ENCODE measurements at regions of chr2 and their contacts with region 1.

Region 1: GRCh38 chr2:74529357-74530238 is at the starts of genes AUP1 and HTRA2:
- DNase-seq: peak; percentile 96 to 99 (median 99)
- H3K4me3 ChIP-seq: peak within 1 kb of the TSS; percentile 64 to 100 (median 93)
- H3K27ac ChIP-seq: peak within 1 kb of the TSS; percentile 11 to 93 (median 81)
- H3K27me3 ChIP-seq: no peaks in the 10 kb centered on the region
- CTCF ChIP-seq: peak in 40 of 56 donors; percentile 15 to 67 (median 44)
- total RNA-seq, gene AUP1: 47.3 to 106 (median 69.1) TPM
- total RNA-seq, gene HTRA2: 25.1 to 46.4 (median 34.3) TPM

Region 2: DNA sequence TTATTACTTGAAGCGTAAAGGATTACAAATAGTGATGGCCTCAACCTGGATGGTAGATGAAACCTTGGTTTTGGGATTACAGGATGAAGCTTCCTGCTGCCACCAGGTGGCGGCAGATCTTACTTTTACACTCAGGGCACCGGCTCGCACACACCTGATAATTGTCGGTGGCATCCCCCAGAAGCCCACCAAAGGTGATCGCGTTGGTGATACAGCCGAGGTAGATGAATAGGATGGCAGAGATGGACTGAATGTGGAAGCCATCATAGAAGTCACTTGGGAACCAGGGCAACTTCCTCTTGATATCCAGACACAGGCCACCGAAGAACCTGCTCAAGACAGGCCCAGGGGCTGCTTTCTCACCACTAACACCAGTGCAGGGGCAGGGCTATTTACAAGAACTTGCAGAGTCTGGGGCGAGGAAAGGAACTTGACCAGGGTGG is 279.4 kb before region 1 on chr2:
- intact Hi-C with region 1: no loop called
- DNase-seq: peak in 6 of 10 donors; percentile 12 to 54 (median 30)
- H3K4me3 ChIP-seq: no peak overlapping the region
- H3K27ac ChIP-seq: no peak overlapping the region
- H3K27me3 ChIP-seq: no peaks in the 10 kb centered on the region
- CTCF ChIP-seq: peak; percentile 54 to 87 (median 76)

Region 3: GRCh38 chr2:74421221-74421870 is 108.3 kb before region 1 on chr2 and contains the starts of genes C2orf81 and WDR54:
- intact Hi-C with region 1: loop called in 1 of 2 experiments (anchors 5 kb)
- DNase-seq: peak; percentile 71 to 94 (median 84)
- H3K4me3 ChIP-seq: peak within 1 kb of the TSS; percentile 47 to 92 (median 77)
- H3K27ac ChIP-seq: peak within 1 kb of the TSS in 57 of 59 donors; percentile 17 to 90 (median 78)
- H3K27me3 ChIP-seq: no peaks in the 10 kb centered on the region
- CTCF ChIP-seq: peak in 1 of 56 donors; percentile 15
- total RNA-seq, gene C2orf81: 2.6 to 9.8 (median 5.6) TPM
- total RNA-seq, gene WDR54: 9.3 to 42.7 (median 26.3) TPM

Region 4: GRCh38 chr2:74482801-74483674 is 46.6 kb before region 1 on chr2 and contains the starts of genes CCDC142 and TTC31:
- intact Hi-C with region 1: loop called (anchors 1 kb)
- DNase-seq: peak; percentile 91 to 97 (median 94)
- H3K4me3 ChIP-seq: peak within 1 kb of the TSS; percentile 68 to 100 (median 90)
- H3K27ac ChIP-seq: peak within 1 kb of the TSS; percentile 65 to 98 (median 92)
- H3K27me3 ChIP-seq: no peaks in the 10 kb centered on the region
- CTCF ChIP-seq: peak; percentile 68 to 96 (median 86)
- total RNA-seq, gene CCDC142: 8.0 to 35.4 (median 19.6) TPM
- total RNA-seq, gene TTC31: 7.8 to 28.4 (median 15.7) TPM

Region 5: DNA sequence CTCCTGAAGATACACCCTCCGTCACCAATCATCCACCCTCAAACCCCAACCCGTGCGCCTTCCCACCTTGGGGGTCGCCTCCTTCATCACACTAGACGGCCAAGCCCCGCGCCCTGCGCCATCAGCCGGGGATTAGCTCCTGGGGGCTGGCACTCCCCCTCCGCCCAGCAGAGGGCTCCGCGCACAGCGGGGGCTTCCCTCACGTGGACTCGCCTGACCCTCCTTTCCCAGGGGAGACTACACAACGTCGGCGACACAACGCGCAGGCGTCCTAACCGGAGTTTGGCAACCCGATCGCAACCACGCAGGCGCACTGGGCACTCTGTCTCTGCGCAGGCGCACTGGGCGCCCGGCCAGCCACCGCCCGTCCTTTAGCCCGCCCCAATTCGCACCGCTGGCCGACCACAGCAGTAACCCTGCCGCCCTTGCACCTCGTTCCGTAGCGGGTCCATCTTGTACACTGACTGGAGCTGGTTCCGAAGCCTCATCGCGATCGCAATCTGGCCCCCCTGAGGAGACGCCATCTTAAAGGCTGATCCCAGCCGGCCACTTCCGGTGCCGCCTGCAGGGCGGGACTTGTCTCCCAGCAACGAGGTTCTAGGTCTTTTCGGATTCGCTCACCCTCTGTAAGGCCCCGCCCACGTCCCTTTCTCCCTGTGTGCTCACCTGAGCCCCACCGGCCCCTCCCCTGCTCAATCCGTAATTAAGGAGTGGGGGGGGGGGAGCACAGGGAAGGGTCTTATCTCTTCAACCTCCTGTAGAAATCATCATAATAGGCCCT is 22.3 kb before region 1 on chr2 and contains the start of gene PCGF1:
- intact Hi-C with region 1: loop called in 1 of 2 experiments (anchors 2 kb)
- DNase-seq: peak; percentile 91 to 99 (median 98)
- H3K4me3 ChIP-seq: peak within 1 kb of the TSS; percentile 56 to 98 (median 86)
- H3K27ac ChIP-seq: peak within 1 kb of the TSS; percentile 91 to 100 (median 99)
- H3K27me3 ChIP-seq: peaks cover 0 to 57% (median 39%) of the 10 kb centered on the region in 45 donors
- CTCF ChIP-seq: peak in 45 of 56 donors; percentile 6 to 59 (median 37)
- total RNA-seq, gene PCGF1: 12.1 to 39.8 (median 22.4) TPM

Region 6: DNA sequence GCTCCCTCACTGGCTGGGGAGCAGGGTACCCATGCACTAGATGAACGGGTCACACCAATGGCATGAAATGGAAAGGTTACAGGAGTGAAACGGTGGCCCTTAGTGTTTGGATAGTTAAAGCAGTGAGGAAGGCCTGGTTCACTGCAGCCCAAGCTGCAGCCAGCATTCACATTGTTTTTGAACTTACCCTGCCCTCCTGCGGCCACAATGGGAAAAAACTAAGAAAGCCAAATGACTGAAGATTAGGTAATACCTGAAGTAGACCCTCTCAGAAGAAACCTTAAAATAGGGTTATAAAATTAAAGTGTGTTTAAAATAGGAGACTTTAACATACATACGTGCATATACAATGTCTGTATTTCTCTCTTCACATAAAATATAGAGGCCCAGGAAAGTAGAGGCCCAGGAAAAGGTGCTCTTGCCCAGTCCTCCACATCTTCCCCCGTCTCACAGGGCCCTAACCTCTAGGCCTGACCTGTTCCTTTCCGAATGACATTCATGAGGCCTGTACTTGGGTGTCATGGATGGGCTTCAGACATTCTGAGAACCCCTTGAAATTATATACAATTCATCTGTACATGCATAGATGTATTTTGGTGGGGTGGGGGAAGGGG is 58.2 kb after region 1 on chr2:
- intact Hi-C with region 1: loop called in 1 of 2 experiments (anchors 1 kb)
- DNase-seq: peak in 7 of 10 donors; percentile 27 to 62 (median 48)
- H3K4me3 ChIP-seq: no peak overlapping the region
- H3K27ac ChIP-seq: no peak overlapping the region
- H3K27me3 ChIP-seq: peaks cover 0 to 18% (median under 1%) of the 10 kb centered on the region in 45 donors
- CTCF ChIP-seq: peak in 55 of 56 donors; percentile 7 to 84 (median 68)

Region 7: DNA sequence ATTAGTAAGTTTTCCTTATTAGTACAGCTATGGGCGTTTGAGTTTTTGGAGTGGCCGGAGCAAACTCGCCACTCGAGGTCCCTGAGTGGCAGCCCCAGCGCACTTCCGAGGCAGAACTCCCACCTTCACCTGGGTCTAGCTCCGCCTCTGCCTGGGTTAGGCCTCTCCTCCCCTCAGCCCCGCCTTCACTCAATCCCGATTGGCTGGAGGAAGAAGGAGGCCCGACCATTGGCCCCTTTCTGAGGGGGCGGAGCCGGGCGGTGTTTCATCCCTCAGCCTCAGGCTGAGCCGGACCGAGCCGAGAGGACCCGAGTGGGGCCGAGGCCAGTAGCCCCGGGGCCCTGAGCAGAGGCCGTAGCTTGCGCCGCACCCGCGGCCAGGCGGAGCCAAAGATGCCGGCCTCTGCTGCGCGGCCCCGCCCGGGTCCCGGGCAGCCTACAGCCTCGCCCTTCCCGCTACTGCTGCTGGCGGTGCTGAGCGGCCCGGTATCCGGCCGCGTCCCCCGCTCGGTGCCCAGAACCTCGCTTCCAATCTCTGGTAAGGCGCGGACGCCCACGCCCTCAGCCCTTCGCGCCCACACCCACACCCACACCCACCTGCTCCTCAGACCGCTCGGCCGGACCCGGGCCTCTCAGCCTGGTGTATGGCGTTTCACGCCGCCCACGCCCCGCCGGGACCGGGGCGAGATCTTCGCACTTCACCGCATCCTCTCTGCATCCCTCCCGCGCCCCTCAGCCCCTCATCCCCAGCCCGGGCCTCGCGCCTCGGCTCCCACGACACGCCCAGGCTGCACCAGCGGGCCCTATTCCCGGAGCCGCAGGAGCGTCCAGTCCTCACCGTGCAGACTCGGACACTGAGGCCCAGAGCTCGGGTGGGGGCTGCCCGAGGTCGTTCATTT is 124.6 kb after region 1 on chr2 and contains the start of gene SEMA4F:
- intact Hi-C with region 1: loop called in 1 of 2 experiments (anchors 2 kb)
- DNase-seq: peak; percentile 89 to 99 (median 96)
- H3K4me3 ChIP-seq: peak within 1 kb of the TSS; percentile 59 to 95 (median 84)
- H3K27ac ChIP-seq: peak within 1 kb of the TSS in 38 of 59 donors; percentile 1 to 85 (median 62)
- H3K27me3 ChIP-seq: peaks cover 0 to 3% (median 0%) of the 10 kb centered on the region in 45 donors
- CTCF ChIP-seq: peak in 23 of 56 donors; percentile 3 to 42 (median 24)
- total RNA-seq, gene SEMA4F: 17.4 to 54.5 (median 34.8) TPM

Region 8: GRCh38 chr2:75710577-75711253 is 1181.1 kb after region 1 on chr2 and contains the start of gene GCFC2:
- intact Hi-C with region 1: no loop called
- DNase-seq: peak; percentile 73 to 91 (median 85)
- H3K4me3 ChIP-seq: peak within 1 kb of the TSS; percentile 53 to 97 (median 83)
- H3K27ac ChIP-seq: peak within 1 kb of the TSS; percentile 57 to 97 (median 90)
- H3K27me3 ChIP-seq: no peaks in the 10 kb centered on the region
- CTCF ChIP-seq: peak in 55 of 56 donors; percentile 20 to 78 (median 53)
- total RNA-seq, gene GCFC2: 13.9 to 35.4 (median 22.0) TPM